ENCODE measurements at regions of chr12 and their contacts with region 1.

Region 1: DNA sequence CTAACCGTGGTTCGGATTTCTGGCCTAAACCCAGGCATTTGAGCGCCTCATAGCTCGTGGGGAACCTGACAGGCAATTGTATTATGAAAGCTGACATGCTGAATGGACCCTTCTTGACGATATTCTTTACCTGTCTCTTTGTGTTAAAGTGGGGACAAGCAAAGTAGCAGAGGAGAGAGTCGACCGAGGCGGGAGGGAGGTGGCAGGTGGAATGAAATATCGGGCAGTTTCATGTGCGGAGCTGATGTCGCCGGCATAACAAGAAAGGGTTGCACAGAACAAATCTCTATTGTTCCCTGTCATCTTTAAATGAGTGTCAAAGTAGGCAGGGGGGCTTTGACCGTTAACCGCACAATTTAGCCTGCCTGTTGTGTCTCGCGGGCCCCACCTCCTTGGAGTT is 11.4 kb downstream of the MYO1H start:
- DNase-seq: no peak
- H3K4me3 ChIP-seq: no peak overlapping the region
- H3K27ac ChIP-seq: no peak overlapping the region
- H3K4me1 ChIP-seq: peaks cover 2% of the 10 kb centered on the region
- H3K27me3 ChIP-seq: no peaks in the 10 kb centered on the region
- CTCF ChIP-seq: no peak
- EP300 ChIP-seq: no peak
- POLR2A ChIP-seq: no peak

Region 2: GRCh38 chr12:109329689-109330088 is 29.4 kb before region 1 on chr12:
- intact Hi-C with region 1: loop called in 1 of 4 experiments (anchors 2 kb)
- DNase-seq: no peak
- H3K4me3 ChIP-seq: no peak overlapping the region
- H3K27ac ChIP-seq: no peak overlapping the region
- H3K4me1 ChIP-seq: peaks cover 8% of the 10 kb centered on the region
- H3K27me3 ChIP-seq: no peaks in the 10 kb centered on the region
- CTCF ChIP-seq: no peak
- EP300 ChIP-seq: no peak
- POLR2A ChIP-seq: no peak

Measured in ovary (tissue), 10 donors.